ENCODE measurements at regions of chr6 and their contacts with region 1.

Region 1: GRCh38 chr6:26183581-26184366 is 96.5 kb downstream of the HFE start:
- DNase-seq: no peak

Region 2: DNA sequence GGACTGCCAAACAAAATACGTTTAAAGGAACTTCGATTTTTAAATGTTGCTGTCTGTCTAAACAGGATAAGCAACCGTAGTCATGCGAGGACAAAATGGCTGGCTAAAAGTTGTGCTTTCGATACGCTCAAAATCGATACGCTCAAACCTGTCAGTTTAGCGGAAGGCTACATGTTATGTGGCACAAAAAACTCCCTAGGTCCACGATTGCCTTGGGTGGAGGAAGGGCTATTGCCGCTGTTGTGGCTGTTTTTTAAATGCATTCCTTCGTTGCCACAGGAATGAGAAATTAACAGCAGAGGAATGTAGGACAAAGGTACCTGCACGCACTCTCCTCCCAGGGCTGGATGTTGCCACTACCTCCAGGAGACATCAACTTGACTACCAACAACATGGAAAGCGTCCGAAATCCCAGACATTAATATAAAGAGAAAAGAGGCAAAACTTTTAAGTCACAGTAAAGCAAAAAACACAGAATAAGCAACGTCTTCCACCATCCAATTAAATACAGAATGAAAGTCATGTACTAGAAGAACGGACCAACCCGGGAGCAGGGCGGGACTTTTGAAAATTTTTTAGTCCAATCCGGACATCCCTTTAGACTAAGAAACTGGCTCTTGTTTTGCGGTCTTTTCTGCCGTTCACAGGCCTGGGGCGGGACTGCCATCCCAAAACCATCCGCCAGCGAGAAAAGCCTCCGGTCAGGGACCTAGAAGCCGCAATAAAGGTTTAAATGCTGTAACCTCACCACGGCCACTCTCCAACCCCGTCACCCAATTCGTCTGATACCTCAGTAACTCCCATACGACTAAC is 128.7 kb before region 1 on chr6:
- CTCF ChIA-PET with region 1: no interaction called
- POLR2A ChIA-PET with region 1: interaction called, 11 read pairs
- DNase-seq: peak; percentile 62

Region 3: DNA sequence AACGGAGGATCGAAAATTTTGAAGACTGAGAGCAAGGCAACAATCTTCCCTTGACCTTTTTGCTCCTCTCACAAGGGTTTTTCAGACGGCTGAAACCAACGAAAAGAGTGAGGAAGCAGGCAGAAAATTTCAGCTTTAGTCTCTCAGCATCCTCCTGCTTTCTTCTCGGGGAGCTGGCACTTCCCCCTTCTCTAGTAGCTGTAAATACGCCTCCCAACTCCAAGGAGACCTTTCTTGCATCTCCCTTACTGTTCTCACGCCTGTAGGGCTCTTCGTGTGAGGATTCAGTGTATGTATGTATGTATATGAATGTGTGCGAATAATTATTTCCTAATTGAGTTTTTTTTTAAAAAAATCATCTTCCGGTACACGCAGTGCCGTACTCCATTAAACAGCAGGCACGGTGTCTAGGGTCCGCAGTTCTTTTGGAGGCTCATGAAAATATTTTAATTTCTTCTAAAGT is 11.2 kb before region 1 on chr6:
- CTCF ChIA-PET with region 1: interaction called, 5 read pairs
- POLR2A ChIA-PET with region 1: interaction called, 39 read pairs
- DNase-seq: no peak

Region 4: GRCh38 chr6:26216356-26216885 is 32.6 kb after region 1 on chr6:
- CTCF ChIA-PET with region 1: no interaction called
- POLR2A ChIA-PET with region 1: interaction called, 15 read pairs
- DNase-seq: no peak

Region 5: DNA sequence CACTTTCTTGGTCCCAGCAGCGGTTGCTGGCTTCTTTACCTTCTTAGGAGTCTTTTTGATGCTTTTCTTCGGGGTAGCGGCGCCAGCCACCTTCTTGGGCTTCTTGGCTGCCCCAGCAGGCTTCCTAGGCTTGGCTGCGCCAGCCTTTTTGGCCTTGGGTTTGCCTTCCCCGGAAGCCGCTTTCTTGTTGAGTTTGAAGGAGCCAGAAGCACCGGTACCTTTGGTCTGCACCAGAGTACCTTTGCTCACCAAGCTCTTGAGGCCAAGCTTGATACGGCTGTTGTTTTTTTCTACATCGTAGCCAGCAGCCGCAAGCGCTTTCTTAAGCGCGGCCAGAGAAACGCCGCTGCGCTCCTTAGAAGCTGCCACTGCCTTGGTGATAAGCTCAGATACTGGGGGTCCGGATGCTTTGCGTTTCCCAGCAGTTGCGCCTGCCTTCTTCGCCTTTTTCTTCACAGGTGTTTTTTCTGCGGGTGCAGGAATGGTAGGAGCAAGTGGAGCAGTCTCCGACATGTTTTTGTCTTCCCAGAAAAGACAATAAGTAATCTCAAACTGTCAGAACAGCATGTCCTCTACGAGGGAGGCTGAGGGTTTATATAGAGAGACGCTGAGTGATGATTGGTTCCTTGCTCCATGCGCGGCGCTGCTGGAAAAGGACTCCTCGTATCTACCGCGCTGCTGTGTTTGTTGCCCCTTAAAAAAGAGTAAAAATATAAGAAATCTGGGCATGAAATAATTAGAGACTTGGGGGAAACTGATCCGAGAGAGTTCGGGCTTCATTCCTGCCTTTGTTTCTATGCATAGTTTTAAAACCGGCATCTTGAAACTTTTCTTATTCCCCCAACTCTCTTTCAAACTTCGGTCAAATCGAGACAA is 50.9 kb after region 1 on chr6:
- CTCF ChIA-PET with region 1: no interaction called
- POLR2A ChIA-PET with region 1: interaction called, 11 read pairs
- DNase-seq: peak; percentile 72

Region 6: GRCh38 chr6:26285143-26286134 is 101.7 kb after region 1 on chr6:
- CTCF ChIA-PET with region 1: no interaction called
- POLR2A ChIA-PET with region 1: interaction called, 15 read pairs
- DNase-seq: peak; percentile 83